ENCODE measurements at regions of chr19 and their contacts with region 1.

Region 1: GRCh38 chr19:7562646-7563393 is 27.3 kb downstream of the PNPLA6 start:
- DNase-seq: no peak
- ATAC-seq: no peak
- H3K4me3 ChIP-seq: no peak overlapping the region
- H3K27ac ChIP-seq: no peak overlapping the region
- H3K4me1 ChIP-seq: no peaks in the 10 kb centered on the region
- H3K27me3 ChIP-seq: no peaks in the 10 kb centered on the region
- CTCF ChIP-seq: no peak
- POLR2A ChIP-seq: no peak

Region 2: GRCh38 chr19:7674010-7675005 is 111.5 kb after region 1 on chr19:
- in situ Hi-C with region 1: loop called in 1 of 4 experiments (anchors 10 kb)
- intact Hi-C with region 1: no loop called
- DNase-seq: peak; percentile 30 to 42
- ATAC-seq: no peak
- H3K4me3 ChIP-seq: no peak overlapping the region
- H3K27ac ChIP-seq: no peak overlapping the region
- H3K4me1 ChIP-seq: no peaks in the 10 kb centered on the region
- H3K27me3 ChIP-seq: peaks cover 13 to 27% (median 18%) of the 10 kb centered on the region in 3 donors
- CTCF ChIP-seq: no peak
- POLR2A ChIP-seq: no peak